K562 (cell line): ENCODE measurements at regions of chr2 and their contacts with region 1.

Region 1: DNA sequence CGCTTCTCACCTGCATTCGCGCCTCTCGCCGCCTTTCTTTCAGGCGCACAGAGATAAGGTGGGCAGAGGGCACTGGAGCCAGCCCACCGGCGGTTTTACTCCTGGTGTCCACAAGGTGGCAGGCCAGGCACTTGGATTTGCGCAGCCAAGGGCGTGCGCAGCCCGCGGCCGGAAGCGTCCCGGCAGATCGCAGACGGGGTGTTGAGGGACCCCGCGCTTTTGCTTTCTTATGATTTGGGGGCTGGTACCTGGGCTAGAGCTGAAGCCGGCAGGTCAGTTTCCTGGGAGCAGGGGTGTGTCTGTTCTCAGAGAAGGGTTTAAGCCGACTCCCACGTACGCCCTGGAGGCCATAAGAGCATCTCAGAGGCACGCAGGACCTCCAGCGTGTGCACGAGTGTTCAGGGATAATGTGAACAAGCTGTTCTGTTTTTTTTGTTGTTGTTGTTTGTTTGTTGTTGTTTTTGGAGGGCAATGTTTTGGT is 305.6 kb upstream of the CXCR4 start:
- DNase-seq: peak; percentile 74 to 81 (median 76)
- ATAC-seq: peak; percentile 100
- H3K4me3 ChIP-seq: peak overlapping the region; percentile 3; the same call in 1 of the 2 replicates
- H3K27ac ChIP-seq: no peak overlapping the region
- H3K4me1 ChIP-seq: peaks cover 0 to 5% of the 10 kb centered on the region in 2 experiments; a peak in 2 of 5 replicates
- H3K27me3 ChIP-seq: peaks cover 0 to 8% of the 10 kb centered on the region in 2 experiments; a peak in 2 of 5 replicates
- CTCF ChIP-seq: peak; percentile 82 to 90 (median 86)
- EP300 ChIP-seq: no peak
- POLR2A ChIP-seq: no peak
- RAD21 ChIP-seq: peak; percentile 87 to 91

Region 2: DNA sequence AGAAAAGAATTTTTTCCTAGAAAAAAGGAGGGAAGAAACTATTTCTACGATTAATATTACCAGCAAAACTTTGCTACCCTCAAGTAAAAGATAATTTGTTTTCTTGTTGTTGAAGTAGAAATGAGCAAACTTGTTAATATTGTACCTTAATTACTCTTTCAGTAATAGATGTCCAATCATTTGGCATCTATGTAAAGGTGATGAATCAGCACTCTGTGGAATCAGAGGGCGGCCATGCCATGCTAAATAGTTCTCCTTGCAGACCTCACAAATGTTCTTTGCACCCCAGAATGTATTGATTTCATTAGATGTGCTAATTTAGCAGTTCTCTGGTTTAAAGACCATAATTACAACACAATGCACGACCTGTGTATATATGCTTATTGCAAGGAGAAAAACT is 312.7 kb after region 1 on chr2:
- CTCF ChIA-PET with region 1: no interaction called
- POLR2A ChIA-PET with region 1: no interaction called
- in situ Hi-C with region 1: no loop called
- intact Hi-C with region 1: loop called (anchors 2 kb)
- DNase-seq: no peak
- ATAC-seq: no peak
- H3K4me3 ChIP-seq: no peak overlapping the region
- H3K27ac ChIP-seq: no peak overlapping the region
- H3K4me1 ChIP-seq: no peaks in the 10 kb centered on the region
- H3K27me3 ChIP-seq: no peaks in the 10 kb centered on the region
- CTCF ChIP-seq: no peak
- EP300 ChIP-seq: no peak
- POLR2A ChIP-seq: no peak
- RAD21 ChIP-seq: no peak